CD8-positive, alpha-beta memory T cell (primary cell): ENCODE measurements at regions of chr16 and their contacts with region 1.

Region 1: GRCh38 chr16:71499775-71500364 is 10.7 kb upstream of the ZNF19 start:
- DNase-seq: peak in 4 of 5 donors; percentile 17 to 54 (median 46)
- H3K4me3 ChIP-seq: no peak overlapping the region
- H3K4me3 Mint-ChIP-seq: no peak overlapping the region
- H3K27ac ChIP-seq: no peak overlapping the region
- H3K27ac Mint-ChIP-seq: no peak overlapping the region
- H3K4me1 ChIP-seq: no peaks in the 10 kb centered on the region
- H3K4me1 Mint-ChIP-seq: no peaks in the 10 kb centered on the region
- H3K27me3 ChIP-seq: no peaks in the 10 kb centered on the region
- H3K27me3 Mint-ChIP-seq: peaks cover 3 to 13% of the 10 kb centered on the region in 2 donors

Region 2: GRCh38 chr16:71412270-71413160 is 87.4 kb before region 1 on chr16:
- CTCF ChIA-PET with region 1: interaction called, 68 read pairs
- POLR2A ChIA-PET with region 1: interaction called, 6 read pairs
- DNase-seq: peak; percentile 46 to 67 (median 50)
- H3K4me3 ChIP-seq: no peak overlapping the region
- H3K4me3 Mint-ChIP-seq: no peak overlapping the region
- H3K27ac ChIP-seq: no peak overlapping the region
- H3K27ac Mint-ChIP-seq: no peak overlapping the region
- H3K4me1 ChIP-seq: peaks cover 6% of the 10 kb centered on the region
- H3K4me1 Mint-ChIP-seq: peaks cover 10 to 16% (median 16%) of the 10 kb centered on the region in 3 donors
- H3K27me3 ChIP-seq: no peaks in the 10 kb centered on the region
- H3K27me3 Mint-ChIP-seq: peaks cover 5 to 49% of the 10 kb centered on the region in 2 donors

Region 3: GRCh38 chr16:71421911-71422310 is 78.0 kb before region 1 on chr16:
- CTCF ChIA-PET with region 1: interaction called, 11 read pairs
- POLR2A ChIA-PET with region 1: no interaction called
- DNase-seq: no peak
- H3K4me3 ChIP-seq: no peak overlapping the region
- H3K4me3 Mint-ChIP-seq: no peak overlapping the region
- H3K27ac ChIP-seq: no peak overlapping the region
- H3K27ac Mint-ChIP-seq: no peak overlapping the region
- H3K4me1 ChIP-seq: no peaks in the 10 kb centered on the region
- H3K4me1 Mint-ChIP-seq: peaks cover 0 to 15% (median 10%) of the 10 kb centered on the region in 3 donors
- H3K27me3 ChIP-seq: peaks cover 9% of the 10 kb centered on the region
- H3K27me3 Mint-ChIP-seq: peaks cover 15 to 33% of the 10 kb centered on the region in 2 donors

Region 4: GRCh38 chr16:71572497-71573116 is 72.7 kb after region 1 on chr16:
- CTCF ChIA-PET with region 1: no interaction called
- POLR2A ChIA-PET with region 1: no interaction called
- DNase-seq: no peak
- H3K4me3 ChIP-seq: no peak overlapping the region
- H3K4me3 Mint-ChIP-seq: no peak overlapping the region
- H3K27ac ChIP-seq: no peak overlapping the region
- H3K27ac Mint-ChIP-seq: no peak overlapping the region
- H3K4me1 ChIP-seq: no peaks in the 10 kb centered on the region
- H3K4me1 Mint-ChIP-seq: no peaks in the 10 kb centered on the region
- H3K27me3 ChIP-seq: no peaks in the 10 kb centered on the region
- H3K27me3 Mint-ChIP-seq: peaks cover 23 to 31% of the 10 kb centered on the region in 2 donors